ENCODE measurements at regions of chr5 and their contacts with region 1.

Region 1: GRCh38 chr5:81794226-81794625 is 43.3 kb upstream of the SSBP2 start:
- DNase-seq: no peak
- H3K4me3 ChIP-seq: no peak overlapping the region
- H3K27ac ChIP-seq: no peak overlapping the region
- H3K4me1 ChIP-seq: no peaks in the 10 kb centered on the region
- H3K27me3 ChIP-seq: no peaks in the 10 kb centered on the region
- CTCF ChIP-seq: no peak
- EP300 ChIP-seq: no peak
- POLR2A ChIP-seq: no peak

Region 2: GRCh38 chr5:81817980-81818379 is 23.8 kb after region 1 on chr5:
- intact Hi-C with region 1: loop called in 1 of 4 experiments (anchors 2 kb)
- DNase-seq: no peak
- H3K4me3 ChIP-seq: no peak overlapping the region
- H3K27ac ChIP-seq: no peak overlapping the region
- H3K4me1 ChIP-seq: no peaks in the 10 kb centered on the region
- H3K27me3 ChIP-seq: no peaks in the 10 kb centered on the region
- CTCF ChIP-seq: no peak
- EP300 ChIP-seq: no peak
- POLR2A ChIP-seq: no peak